ENCODE measurements at regions of chr12 and their contacts with region 1.

Region 1: GRCh38 chr12:94676031-94676641 is 25.8 kb upstream of the TMCC3 start:
- DNase-seq: peak; percentile 39 to 81
- ATAC-seq: peak; percentile 84 to 96 (median 93)
- H3K4me3 ChIP-seq: no peak overlapping the region
- H3K4me3 Mint-ChIP-seq: peak overlapping the region; percentile 87
- H3K27ac ChIP-seq: peak overlapping the region; percentile 87
- H3K27ac Mint-ChIP-seq: peak overlapping the region; percentile 95
- H3K4me1 ChIP-seq: peaks cover 44% of the 10 kb centered on the region
- H3K4me1 Mint-ChIP-seq: peaks cover 56 to 58% of the 10 kb centered on the region in 2 donors
- H3K27me3 ChIP-seq: no peaks in the 10 kb centered on the region
- H3K27me3 Mint-ChIP-seq: no peaks in the 10 kb centered on the region
- CTCF ChIP-seq: no peak

Region 2: DNA sequence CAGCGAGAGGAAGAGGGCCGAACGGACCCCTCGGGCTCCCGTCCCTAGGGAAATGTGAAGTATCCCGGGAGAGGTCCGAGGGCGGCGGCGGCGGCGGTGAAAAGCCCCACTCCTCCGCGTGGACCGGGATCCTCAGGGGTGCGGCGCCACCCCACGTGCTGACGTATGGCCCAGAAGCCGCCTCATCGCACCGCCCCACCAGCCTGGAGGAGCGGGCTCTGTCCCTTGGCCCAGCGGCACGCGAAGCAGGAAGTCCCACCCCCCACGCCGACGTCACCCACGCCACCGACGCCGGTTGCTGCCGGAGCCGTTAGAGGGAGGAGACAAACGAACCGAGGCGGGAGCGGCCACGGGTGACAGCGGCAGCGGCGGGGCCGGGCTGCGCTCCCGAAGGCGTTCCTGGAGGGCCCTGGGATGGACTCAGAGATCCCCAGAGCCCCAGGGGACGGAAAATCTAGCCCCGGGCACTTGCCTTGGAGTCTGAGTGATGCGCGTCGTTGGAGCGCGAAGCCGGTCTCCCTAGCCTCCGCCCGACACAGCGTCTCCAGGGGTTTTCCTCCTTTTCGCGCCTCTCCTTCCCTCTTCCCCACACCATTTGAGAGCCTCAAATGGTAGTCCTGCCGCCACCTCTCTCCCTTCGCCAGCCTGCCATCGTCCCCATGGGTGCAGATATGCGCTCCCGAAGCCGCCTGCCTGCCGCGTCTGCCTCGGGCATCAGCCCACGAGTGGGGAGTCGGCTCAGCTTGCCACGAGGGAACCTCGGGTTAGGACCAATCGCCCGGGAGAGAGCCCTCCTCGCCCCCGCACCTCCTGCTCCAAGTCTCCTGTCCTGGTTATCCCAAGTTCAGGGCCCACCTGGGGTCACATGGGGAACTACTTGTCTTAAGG is 216.2 kb before region 1 on chr12 and contains the start of gene CEP83:
- intact Hi-C with region 1: loop called (anchors 5 kb)
- DNase-seq: peak; percentile 96 to 98
- ATAC-seq: peak; percentile 96 to 99 (median 98)
- H3K4me3 ChIP-seq: peak within 1 kb of the TSS; percentile 85
- H3K4me3 Mint-ChIP-seq: peak within 1 kb of the TSS; percentile 94
- H3K27ac ChIP-seq: peak within 1 kb of the TSS; percentile 86
- H3K27ac Mint-ChIP-seq: peak within 1 kb of the TSS; percentile 90 to 95
- H3K4me1 ChIP-seq: peaks cover 6% of the 10 kb centered on the region
- H3K4me1 Mint-ChIP-seq: peaks cover 13 to 18% of the 10 kb centered on the region in 2 donors
- H3K27me3 ChIP-seq: no peaks in the 10 kb centered on the region
- H3K27me3 Mint-ChIP-seq: peaks cover 7 to 10% of the 10 kb centered on the region in 2 donors
- CTCF ChIP-seq: no peak
- total RNA-seq, gene CEP83: 13.3 to 19.3 (median 15.2) TPM

Region 3: DNA sequence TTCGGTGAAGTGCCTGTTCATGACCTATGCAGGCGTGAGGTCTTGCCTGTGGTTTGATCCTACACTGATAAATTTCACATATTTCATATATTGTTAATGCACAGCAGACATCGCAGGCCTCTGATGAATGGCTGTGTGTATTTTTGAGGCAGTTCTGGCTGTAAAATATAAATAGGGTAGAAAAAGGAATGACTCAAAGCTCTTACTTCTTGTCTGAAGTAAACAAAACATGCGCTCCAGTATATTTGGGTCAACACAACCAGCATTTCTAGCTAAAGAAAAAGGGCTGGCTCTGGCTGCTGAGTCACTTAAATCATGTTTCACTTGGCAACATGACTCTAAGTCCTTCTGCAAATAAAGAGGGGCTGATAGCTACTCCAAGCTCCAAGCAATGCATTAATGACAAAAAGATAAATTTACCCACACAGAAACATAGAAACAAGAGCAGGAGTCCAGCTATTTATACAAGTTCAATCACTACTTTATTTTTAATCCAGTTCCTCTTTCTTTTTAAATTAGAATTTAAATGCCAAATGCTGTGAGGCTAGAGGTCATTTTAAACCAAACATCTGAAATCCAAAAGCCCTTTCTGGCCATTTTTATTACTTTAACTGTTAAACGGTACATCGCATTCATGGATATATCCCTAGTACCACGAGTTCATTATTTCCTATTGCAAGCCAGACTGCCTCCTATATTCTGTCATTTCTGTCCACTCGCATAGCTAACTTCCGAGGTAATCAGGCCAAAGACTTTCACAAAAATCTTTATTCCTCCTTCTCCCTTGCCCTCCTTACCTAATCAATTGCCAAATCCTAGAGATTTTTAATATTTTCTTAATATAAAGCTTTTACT is 28.5 kb after region 1 on chr12:
- intact Hi-C with region 1: loop called (anchors 1 kb)
- DNase-seq: peak in 1 of 2 donors; percentile 25
- ATAC-seq: peak; percentile 55 to 76 (median 72)
- H3K4me3 ChIP-seq: no peak overlapping the region
- H3K4me3 Mint-ChIP-seq: peak overlapping the region; percentile 18
- H3K27ac ChIP-seq: no peak overlapping the region
- H3K27ac Mint-ChIP-seq: peak overlapping the region; percentile 57 to 79
- H3K4me1 ChIP-seq: no peaks in the 10 kb centered on the region
- H3K4me1 Mint-ChIP-seq: peaks cover 19 to 39% of the 10 kb centered on the region in 2 donors
- H3K27me3 ChIP-seq: no peaks in the 10 kb centered on the region
- H3K27me3 Mint-ChIP-seq: peaks cover 0 to 11% of the 10 kb centered on the region in 2 donors
- CTCF ChIP-seq: no peak

Region 4: GRCh38 chr12:94941440-94941862 is 265.3 kb after region 1 on chr12:
- intact Hi-C with region 1: loop called (anchors 2 kb)
- DNase-seq: peak; percentile 58 to 72
- ATAC-seq: peak; percentile 78 to 90 (median 85)
- H3K4me3 ChIP-seq: no peak overlapping the region
- H3K4me3 Mint-ChIP-seq: peak overlapping the region; percentile 74
- H3K27ac ChIP-seq: peak overlapping the region; percentile 55
- H3K27ac Mint-ChIP-seq: peak overlapping the region; percentile 90 to 93
- H3K4me1 ChIP-seq: peaks cover 62% of the 10 kb centered on the region
- H3K4me1 Mint-ChIP-seq: peaks cover 61 to 70% of the 10 kb centered on the region in 2 donors
- H3K27me3 ChIP-seq: no peaks in the 10 kb centered on the region
- H3K27me3 Mint-ChIP-seq: no peaks in the 10 kb centered on the region
- CTCF ChIP-seq: no peak